ENCODE measurements at regions of chr11 and their contacts with region 1.

Region 1: DNA sequence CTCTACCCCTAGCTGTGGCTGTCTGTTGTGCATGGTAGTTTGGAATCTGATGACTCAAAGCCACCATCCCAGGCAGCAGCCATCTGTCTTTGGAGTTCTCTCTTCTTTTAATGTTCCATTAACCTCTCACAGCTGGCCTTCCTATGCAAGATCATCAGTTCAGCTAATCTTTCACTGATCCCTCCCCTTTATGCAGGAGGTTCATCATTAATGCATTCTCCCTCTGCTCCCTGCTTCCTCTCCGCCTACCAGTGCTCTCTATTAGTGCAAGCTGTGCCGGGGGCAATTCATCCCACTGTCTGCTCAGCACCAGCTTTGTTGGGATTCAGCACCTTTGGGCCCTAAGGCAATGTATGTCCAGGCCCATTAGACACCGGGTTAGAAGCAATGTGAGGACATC is 413.0 kb upstream of the LRRC4C start:
- DNase-seq: no peak
- H3K4me3 ChIP-seq: no peak overlapping the region
- H3K4me3 Mint-ChIP-seq: no peak overlapping the region
- H3K27ac Mint-ChIP-seq: no peak overlapping the region
- H3K4me1 ChIP-seq: no peaks in the 10 kb centered on the region
- H3K4me1 Mint-ChIP-seq: no peaks in the 10 kb centered on the region
- H3K27me3 ChIP-seq: no peaks in the 10 kb centered on the region
- H3K27me3 Mint-ChIP-seq: peaks cover 8% of the 10 kb centered on the region
- CTCF ChIP-seq: no peak

Region 2: GRCh38 chr11:41816406-41816805 is 56.0 kb before region 1 on chr11:
- CTCF ChIA-PET with region 1: interaction called, 10 read pairs
- POLR2A ChIA-PET with region 1: no interaction called
- intact Hi-C with region 1: no loop called
- DNase-seq: no peak
- H3K4me3 ChIP-seq: no peak overlapping the region
- H3K4me3 Mint-ChIP-seq: no peak overlapping the region
- H3K27ac Mint-ChIP-seq: no peak overlapping the region
- H3K4me1 ChIP-seq: no peaks in the 10 kb centered on the region
- H3K4me1 Mint-ChIP-seq: no peaks in the 10 kb centered on the region
- H3K27me3 ChIP-seq: no peaks in the 10 kb centered on the region
- H3K27me3 Mint-ChIP-seq: no peaks in the 10 kb centered on the region
- CTCF ChIP-seq: no peak

Region 3: GRCh38 chr11:41851743-41852142 is 20.7 kb before region 1 on chr11:
- CTCF ChIA-PET with region 1: no interaction called
- POLR2A ChIA-PET with region 1: no interaction called
- intact Hi-C with region 1: no loop called
- DNase-seq: no peak
- H3K4me3 ChIP-seq: no peak overlapping the region
- H3K4me3 Mint-ChIP-seq: no peak overlapping the region
- H3K27ac Mint-ChIP-seq: no peak overlapping the region
- H3K4me1 ChIP-seq: no peaks in the 10 kb centered on the region
- H3K4me1 Mint-ChIP-seq: no peaks in the 10 kb centered on the region
- H3K27me3 ChIP-seq: no peaks in the 10 kb centered on the region
- H3K27me3 Mint-ChIP-seq: no peaks in the 10 kb centered on the region
- CTCF ChIP-seq: no peak